Left colon (tissue), 2 donors: ENCODE measurements at regions of chr11 and their contacts with region 1.

Region 1: DNA sequence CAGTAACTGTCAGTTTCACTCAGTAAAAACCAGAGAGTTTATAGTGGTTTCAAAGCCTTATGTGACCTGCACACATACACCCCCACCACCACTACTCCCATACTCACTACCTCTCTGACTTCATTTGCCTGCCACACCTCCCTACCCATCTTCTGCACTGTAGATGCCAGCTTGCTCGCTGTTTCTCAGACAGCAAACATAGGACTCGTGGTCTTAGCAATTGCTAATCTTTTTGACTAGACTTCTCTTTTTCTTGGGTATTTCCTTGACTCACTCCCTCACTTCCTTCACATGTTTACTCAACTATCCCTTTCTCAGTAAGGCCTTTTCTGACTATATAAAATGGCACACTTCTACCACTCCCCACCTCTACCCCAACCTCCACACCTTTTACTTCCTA is 27.8 kb downstream of the CEP295 start:
- DNase-seq: no peak
- ATAC-seq: no peak

Region 2: DNA sequence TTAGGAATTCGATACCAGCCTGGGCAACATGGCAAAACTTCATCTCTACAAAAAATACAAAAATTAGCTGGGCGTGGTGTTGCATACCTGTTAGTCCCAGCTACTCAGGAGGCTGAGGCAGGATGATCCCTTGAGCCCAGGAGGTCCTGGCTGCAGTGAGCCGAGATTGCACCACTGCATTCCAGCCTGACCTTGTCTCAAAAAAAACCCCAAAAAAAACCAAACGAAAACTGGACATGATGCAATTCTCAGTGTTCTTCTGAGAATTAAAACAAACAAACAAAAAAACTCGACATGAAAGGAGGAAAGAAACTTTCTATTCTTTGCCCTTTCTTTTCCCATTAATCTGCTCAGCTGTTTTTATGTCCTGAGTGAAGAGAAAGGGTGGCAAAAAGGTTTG is 102.3 kb after region 1 on chr11:
- intact Hi-C with region 1: loop called in 1 of 2 experiments (anchors 10 kb)
- DNase-seq: no peak
- ATAC-seq: no peak